ENCODE measurements at regions of chrX and their contacts with region 1.

Region 1: DNA sequence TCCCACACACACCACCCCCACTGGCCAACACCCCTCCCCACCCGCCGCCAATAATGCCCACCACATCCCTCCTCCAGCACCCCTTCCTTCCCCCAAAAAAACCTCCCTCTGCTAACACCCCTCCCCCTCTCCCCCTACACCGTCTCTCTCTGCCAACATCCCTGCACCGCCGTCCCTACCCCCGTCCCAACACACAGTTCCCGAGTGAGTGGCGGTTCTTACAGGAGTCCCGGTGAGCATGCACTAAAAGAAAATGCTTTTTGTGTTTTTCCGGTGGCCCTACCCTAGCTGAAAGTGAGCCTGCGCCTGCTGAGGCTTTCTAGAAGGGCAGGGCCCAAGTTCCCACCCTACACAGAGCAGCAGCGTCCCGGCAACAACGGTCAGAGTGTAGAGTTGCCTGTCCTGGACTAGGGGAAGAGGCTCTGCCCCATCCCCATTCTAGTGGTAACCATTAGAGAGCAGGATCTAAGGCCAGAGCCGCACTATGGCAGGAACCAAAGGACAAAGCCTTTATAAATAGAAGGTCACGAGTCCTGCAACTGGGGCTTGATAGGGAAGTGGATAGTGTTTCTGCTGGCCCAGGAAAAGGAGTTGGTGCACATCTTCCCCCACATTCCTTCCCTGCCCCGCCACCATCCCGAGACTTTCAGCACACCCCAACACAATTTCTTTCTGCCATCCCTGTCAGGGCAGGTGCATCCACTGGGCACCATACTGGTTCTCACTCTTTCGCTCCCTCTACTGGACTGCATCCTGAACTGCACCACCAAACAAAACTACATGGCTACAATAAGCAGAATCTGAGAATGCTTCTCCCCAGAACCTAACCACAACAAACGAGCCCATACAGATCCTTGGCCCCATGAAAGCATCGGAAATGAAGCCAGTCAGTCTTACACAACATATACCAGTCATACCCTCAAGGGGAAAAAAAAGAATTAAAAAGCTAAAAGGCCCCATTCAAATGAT is 78.1 kb upstream of the PAGE3 start:
- DNase-seq: peak; percentile 59
- H3K4me3 Mint-ChIP-seq: no peak overlapping the region
- H3K27ac Mint-ChIP-seq: no peak overlapping the region
- H3K4me1 Mint-ChIP-seq: peaks cover 20% of the 10 kb centered on the region
- H3K27me3 Mint-ChIP-seq: no peaks in the 10 kb centered on the region

Region 2: DNA sequence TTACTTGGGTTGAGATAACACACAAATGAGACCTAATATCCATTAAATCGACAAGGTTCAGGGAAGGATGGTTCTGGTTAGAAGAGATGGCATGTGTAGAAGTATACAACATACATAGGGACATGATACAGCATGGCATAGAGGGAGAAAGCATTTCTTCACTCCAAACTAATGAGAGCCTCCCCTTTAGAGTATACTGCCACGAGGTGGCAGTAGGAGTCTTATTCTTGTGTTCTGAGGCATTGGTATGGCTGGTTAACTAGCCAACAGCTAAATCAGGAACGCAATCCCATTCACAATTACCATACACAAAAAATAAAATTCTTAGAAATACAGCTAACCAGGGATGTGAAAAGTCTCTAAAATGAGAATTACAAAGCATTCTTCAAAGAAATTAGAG is 451.2 kb before region 1 on chrX:
- CTCF ChIA-PET with region 1: no interaction called
- intact Hi-C with region 1: loop called (anchors 1 kb)
- DNase-seq: peak; percentile 51
- H3K4me3 Mint-ChIP-seq: no peak overlapping the region
- H3K27ac Mint-ChIP-seq: no peak overlapping the region
- H3K4me1 Mint-ChIP-seq: no peaks in the 10 kb centered on the region
- H3K27me3 Mint-ChIP-seq: no peaks in the 10 kb centered on the region

Region 3: DNA sequence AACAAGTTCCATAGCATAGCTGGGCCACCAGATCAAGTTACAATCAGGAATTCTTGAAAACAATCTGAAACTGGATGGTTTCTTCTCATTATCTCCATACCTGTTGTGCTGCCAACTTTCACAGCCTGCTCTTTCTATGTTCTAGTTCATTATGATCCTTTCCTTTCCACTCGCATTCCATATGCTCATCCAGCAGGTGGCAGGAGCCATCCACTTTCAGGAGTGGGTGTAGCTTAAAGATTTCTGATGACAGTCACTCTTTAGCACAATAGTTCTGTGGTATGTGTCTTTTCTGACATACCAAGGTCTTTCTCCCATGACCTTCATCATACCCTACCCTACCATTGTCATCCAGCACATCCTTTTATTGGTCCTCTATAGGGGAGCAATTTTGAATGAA is 207.6 kb before region 1 on chrX:
- CTCF ChIA-PET with region 1: no interaction called
- intact Hi-C with region 1: loop called (anchors 1 kb)
- DNase-seq: peak; percentile 56
- H3K4me3 Mint-ChIP-seq: no peak overlapping the region
- H3K27ac Mint-ChIP-seq: no peak overlapping the region
- H3K4me1 Mint-ChIP-seq: no peaks in the 10 kb centered on the region
- H3K27me3 Mint-ChIP-seq: no peaks in the 10 kb centered on the region

Region 4: DNA sequence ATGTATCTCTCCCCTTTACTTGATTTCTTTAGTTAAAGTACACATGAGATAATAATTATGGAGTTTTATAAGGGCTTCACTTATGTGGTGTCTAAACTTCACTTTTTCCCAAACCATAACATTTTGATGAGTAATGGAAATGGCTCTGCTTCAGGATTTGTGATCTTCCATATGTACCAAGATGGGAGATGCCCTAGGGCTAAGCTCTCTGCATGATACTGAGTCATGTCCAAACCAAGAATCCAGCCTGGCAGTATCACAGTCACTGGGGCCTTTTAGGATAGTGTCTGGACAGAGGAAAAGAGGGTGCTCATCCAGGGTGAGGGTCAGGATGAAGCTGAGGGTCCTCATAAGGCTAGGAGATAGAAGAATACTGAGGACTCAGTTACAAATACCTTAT is 30.2 kb before region 1 on chrX:
- CTCF ChIA-PET with region 1: no interaction called
- intact Hi-C with region 1: no loop called
- DNase-seq: no peak
- H3K4me3 Mint-ChIP-seq: no peak overlapping the region
- H3K27ac Mint-ChIP-seq: no peak overlapping the region
- H3K4me1 Mint-ChIP-seq: no peaks in the 10 kb centered on the region
- H3K27me3 Mint-ChIP-seq: no peaks in the 10 kb centered on the region